Panc1 (cell line): ENCODE measurements at regions of chr22 and their contacts with region 1.

Region 1: GRCh38 chr22:45435544-45436139 is 22.1 kb downstream of the RIBC2 start:
- DNase-seq: peak; percentile 67
- ATAC-seq: peak; percentile 96
- H3K4me3 ChIP-seq: no peak overlapping the region
- H3K27ac ChIP-seq: no peak overlapping the region
- H3K4me1 ChIP-seq: no peaks in the 10 kb centered on the region
- H3K27me3 ChIP-seq: no peaks in the 10 kb centered on the region
- CTCF ChIP-seq: peak; percentile 89

Region 2: GRCh38 chr22:45268958-45269844 is 166.4 kb before region 1 on chr22:
- CTCF ChIA-PET with region 1: interaction called, 3 read pairs
- POLR2A ChIA-PET with region 1: no interaction called
- in situ Hi-C with region 1: no loop called
- intact Hi-C with region 1: loop called (anchors 1 kb)
- DNase-seq: no peak
- ATAC-seq: peak; percentile 87
- H3K4me3 ChIP-seq: peak overlapping the region; percentile 55 to 62
- H3K27ac ChIP-seq: no peak overlapping the region
- H3K4me1 ChIP-seq: no peaks in the 10 kb centered on the region; the same call in 1 of the 2 replicates
- H3K27me3 ChIP-seq: no peaks in the 10 kb centered on the region
- CTCF ChIP-seq: peak; percentile 79; the same call in 1 of the 2 replicates

Region 3: DNA sequence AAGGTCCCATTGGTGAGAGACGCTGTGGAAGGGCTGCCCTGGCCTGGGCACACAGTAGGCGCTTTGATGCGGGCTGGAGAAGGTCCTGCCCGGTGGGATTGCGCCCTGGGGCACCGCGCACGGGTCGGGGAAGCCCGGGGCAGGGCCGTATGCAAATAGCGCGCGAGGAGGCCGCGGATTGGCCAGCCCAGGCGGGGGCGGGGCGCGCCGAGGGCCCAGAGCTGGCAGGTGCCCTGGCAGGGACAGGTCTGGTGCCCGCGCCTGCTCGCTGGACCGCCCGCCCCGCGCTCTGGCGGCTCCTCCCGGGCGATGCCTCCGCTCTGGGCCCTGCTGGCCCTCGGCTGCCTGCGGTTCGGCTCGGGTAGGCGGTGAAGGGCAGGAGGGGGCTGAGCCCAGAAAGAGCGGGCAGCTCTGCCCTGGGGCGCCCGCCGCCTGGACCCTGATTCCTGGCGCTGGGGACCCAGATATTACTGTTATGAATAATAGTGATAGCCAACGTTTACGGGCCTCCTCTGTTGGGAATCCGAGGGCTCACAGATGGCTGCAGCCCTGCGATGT is 150.9 kb before region 1 on chr22 and contains the start of gene UPK3A:
- CTCF ChIA-PET with region 1: no interaction called
- POLR2A ChIA-PET with region 1: no interaction called
- in situ Hi-C with region 1: no loop called
- intact Hi-C with region 1: no loop called
- DNase-seq: no peak
- ATAC-seq: peak; percentile 83
- H3K4me3 ChIP-seq: peak within 1 kb of the TSS; percentile 17 to 39
- H3K27ac ChIP-seq: no peak within 1 kb of the TSS
- H3K4me1 ChIP-seq: no peaks in the 10 kb centered on the region; the same call in 1 of the 2 replicates
- H3K27me3 ChIP-seq: no peaks in the 10 kb centered on the region
- CTCF ChIP-seq: no peak
- total RNA-seq, gene UPK3A: not detected

Region 4: DNA sequence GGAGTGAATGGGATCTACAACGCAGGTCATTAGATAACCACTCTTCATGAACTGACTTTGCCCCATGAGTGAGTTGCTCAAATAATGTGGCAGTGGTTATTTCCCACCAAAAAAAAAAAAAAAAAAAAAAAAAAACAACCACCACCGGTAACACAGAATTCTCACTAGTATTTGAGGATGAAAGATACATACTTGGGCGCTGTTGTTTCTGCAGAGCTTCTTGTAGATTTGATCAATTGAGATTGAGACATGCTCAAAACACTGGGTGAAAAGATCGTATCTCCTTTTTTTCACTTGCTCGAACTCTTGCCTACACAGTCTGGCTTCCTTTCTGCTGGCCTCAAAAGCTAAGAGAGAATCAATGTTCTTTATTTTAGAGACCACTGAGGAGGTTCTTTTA is 81.9 kb before region 1 on chr22:
- CTCF ChIA-PET with region 1: no interaction called
- POLR2A ChIA-PET with region 1: interaction called, 11 read pairs
- in situ Hi-C with region 1: no loop called
- intact Hi-C with region 1: no loop called
- DNase-seq: no peak
- ATAC-seq: no peak
- H3K4me3 ChIP-seq: no peak overlapping the region
- H3K27ac ChIP-seq: no peak overlapping the region
- H3K4me1 ChIP-seq: no peaks in the 10 kb centered on the region
- H3K27me3 ChIP-seq: no peaks in the 10 kb centered on the region
- CTCF ChIP-seq: no peak